Panc1 (cell line): ENCODE measurements at regions of chr5 and their contacts with region 1.

Region 1: DNA sequence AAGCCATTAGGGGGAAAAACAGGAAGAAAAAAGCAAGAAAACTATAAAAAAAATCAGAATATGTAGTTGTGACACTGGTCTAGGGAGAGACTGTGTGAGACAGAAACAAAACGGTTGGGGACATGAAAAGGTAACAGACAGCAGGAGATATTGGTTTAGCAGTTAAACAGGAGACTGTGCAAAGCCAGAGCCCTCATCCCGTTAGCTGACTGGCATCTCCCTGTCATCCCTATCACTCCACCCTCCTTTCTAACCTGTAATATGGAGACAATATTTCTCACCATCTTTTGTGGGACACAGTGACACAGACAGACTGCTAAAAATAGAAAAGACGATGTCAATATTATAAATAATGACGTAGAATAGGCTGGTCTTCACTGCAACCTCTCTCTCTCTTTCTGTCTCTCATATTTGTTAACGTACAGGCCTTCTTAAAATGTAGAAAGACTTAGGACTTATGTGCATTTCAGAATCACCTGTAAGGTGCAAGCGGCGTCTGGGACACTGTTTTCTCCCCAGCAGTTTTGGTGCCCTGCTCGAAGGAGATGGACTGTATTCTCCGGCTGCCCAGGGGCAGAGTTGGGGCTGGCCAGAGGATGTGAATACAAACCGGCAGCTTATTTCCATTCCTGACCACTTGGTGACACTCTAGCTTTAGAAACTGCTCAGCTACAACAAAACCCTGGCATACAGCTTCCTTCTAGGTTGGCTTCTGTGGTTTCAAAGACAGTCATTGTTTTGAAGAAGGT is 190.6 kb downstream of the MAT2B start:
- DNase-seq: peak; percentile 42
- ATAC-seq: peak; percentile 98
- H3K4me3 ChIP-seq: no peak overlapping the region
- H3K27ac ChIP-seq: no peak overlapping the region
- H3K4me1 ChIP-seq: no peaks in the 10 kb centered on the region
- H3K27me3 ChIP-seq: no peaks in the 10 kb centered on the region; the same call in 1 of the 2 replicates
- CTCF ChIP-seq: peak; percentile 82

Region 2: GRCh38 chr5:163571728-163572127 is 124.3 kb before region 1 on chr5:
- CTCF ChIA-PET with region 1: no interaction called
- POLR2A ChIA-PET with region 1: no interaction called
- in situ Hi-C with region 1: no loop called
- intact Hi-C with region 1: no loop called
- DNase-seq: no peak
- ATAC-seq: no peak
- H3K4me3 ChIP-seq: no peak overlapping the region
- H3K27ac ChIP-seq: no peak overlapping the region
- H3K4me1 ChIP-seq: 0 out of 2 replicates have a peak, but pooled peaks cover under 1% of the 10 kb centered on the region
- H3K27me3 ChIP-seq: peaks cover 19% of the 10 kb centered on the region; the same call in 1 of the 2 replicates
- CTCF ChIP-seq: no peak

Region 3: GRCh38 chr5:164475339-164475977 is 779.5 kb after region 1 on chr5:
- CTCF ChIA-PET with region 1: no interaction called
- POLR2A ChIA-PET with region 1: no interaction called
- in situ Hi-C with region 1: no loop called
- intact Hi-C with region 1: loop called (anchors 5 kb)
- DNase-seq: no peak
- ATAC-seq: no peak
- H3K4me3 ChIP-seq: no peak overlapping the region
- H3K27ac ChIP-seq: no peak overlapping the region
- H3K4me1 ChIP-seq: no peaks in the 10 kb centered on the region
- H3K27me3 ChIP-seq: no peaks in the 10 kb centered on the region
- CTCF ChIP-seq: peak; percentile 62; the same call in 1 of the 2 replicates

Region 4: GRCh38 chr5:164504141-164504772 is 808.3 kb after region 1 on chr5:
- CTCF ChIA-PET with region 1: interaction called, 3 read pairs
- POLR2A ChIA-PET with region 1: no interaction called
- in situ Hi-C with region 1: no loop called
- intact Hi-C with region 1: loop called (anchors 5 kb)
- DNase-seq: peak; percentile 36
- ATAC-seq: 0 out of 2 replicates have a peak, but pooled peaks have one; percentile 56
- H3K4me3 ChIP-seq: no peak overlapping the region
- H3K27ac ChIP-seq: no peak overlapping the region
- H3K4me1 ChIP-seq: no peaks in the 10 kb centered on the region
- H3K27me3 ChIP-seq: no peaks in the 10 kb centered on the region
- CTCF ChIP-seq: peak; percentile 80